ENCODE measurements at regions of chr3 and their contacts with region 1.

Region 1: DNA sequence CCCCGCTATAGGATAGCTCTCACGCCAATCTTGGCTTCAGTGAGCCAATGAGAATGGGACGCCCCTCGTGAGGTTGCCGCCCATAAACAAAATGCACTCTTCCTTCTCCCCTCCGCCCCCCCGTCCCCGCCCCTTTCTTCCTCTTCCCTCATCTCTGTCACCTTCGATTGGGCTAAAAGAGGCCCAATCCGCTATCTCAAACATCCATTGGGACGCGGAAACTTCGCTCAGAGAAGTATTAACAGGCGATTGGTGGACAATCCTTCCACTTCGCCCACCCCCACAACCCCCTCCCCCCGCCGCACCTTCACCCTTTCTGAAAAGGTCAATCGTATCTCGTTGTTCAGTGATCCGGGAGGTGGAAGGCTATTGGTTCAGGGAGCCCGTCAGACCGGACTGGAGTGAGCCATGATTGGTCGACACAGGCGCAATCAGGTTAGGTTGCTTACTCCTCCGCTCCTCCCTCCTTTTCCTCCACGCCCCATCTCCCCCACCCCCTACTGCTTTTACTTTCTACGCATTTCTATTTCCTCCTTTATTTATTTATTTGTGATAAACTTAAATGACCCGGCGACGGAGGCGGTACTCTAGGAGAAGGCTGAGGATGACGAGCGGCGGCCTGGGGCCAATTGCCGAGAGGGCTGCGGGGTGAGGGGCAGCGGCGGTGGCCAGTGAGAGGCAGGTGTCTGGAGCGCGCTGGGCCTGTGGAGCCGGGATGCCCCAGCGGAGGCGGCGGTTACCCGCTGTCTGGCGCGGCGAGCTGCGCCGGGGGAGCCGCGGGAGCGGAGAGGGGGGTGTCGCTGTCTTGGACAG is 447 bp upstream of the ZBTB20 start:
- DNase-seq: peak; percentile 85
- ATAC-seq: peak; percentile 84
- H3K4me3 Mint-ChIP-seq: peak overlapping the region; percentile 99
- H3K27ac Mint-ChIP-seq: peak overlapping the region; percentile 100
- H3K4me1 Mint-ChIP-seq: peaks cover 9% of the 10 kb centered on the region
- H3K27me3 Mint-ChIP-seq: no peaks in the 10 kb centered on the region

Region 2: DNA sequence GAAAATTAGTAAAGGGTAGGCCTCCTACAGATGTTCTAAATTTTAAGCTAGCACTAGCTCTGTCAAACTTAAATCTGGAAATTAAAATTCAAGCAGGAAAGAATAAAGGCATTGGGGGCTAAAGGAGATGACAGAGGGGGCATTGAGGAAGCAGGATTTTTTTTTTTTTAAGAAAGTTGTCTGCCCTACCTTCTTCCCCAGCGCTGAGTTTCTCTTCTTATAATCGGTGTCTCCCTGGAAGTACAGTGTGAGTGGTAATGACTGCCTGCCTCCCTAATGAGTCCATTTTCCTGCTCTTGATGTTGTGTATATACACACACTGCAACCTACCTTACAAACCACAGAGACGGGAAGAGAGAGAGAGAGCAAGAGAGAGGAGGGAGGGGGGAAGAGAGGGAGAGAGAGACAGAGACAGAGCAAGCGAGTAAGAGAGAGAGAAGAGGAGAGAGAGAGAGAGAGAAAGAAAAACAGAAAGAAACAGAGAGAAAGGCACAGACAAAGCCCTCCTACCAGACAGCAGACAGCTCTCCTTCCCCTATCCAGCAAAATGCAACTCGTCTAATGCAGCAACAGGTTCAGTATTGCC is 47.5 kb before region 1 on chr3:
- POLR2A ChIA-PET with region 1: interaction called, 31 read pairs
- DNase-seq: no peak
- ATAC-seq: peak; percentile 92
- H3K4me3 Mint-ChIP-seq: peak overlapping the region; percentile 82
- H3K27ac Mint-ChIP-seq: peak overlapping the region; percentile 84
- H3K4me1 Mint-ChIP-seq: peaks cover 11% of the 10 kb centered on the region
- H3K27me3 Mint-ChIP-seq: no peaks in the 10 kb centered on the region

Region 3: DNA sequence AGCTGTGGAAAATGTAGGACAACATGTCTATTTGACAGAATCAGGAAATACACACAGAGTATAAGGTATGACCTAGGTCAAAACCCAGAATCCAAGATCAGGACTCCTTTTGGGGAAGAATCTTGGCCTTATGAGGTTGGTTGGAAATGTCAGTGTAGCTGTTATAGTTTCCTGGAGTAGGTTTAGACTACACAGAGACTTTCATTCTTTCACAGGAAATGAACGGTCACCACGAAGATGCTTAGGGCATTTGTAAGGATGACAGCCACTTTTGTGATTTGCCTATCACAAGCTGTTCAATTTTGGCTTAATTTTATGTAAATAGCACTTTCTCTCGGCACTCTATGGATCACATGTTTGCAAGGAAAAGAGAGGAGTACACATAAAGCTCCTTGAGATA is 18.2 kb after region 1 on chr3:
- POLR2A ChIA-PET with region 1: interaction called, 79 read pairs
- DNase-seq: no peak
- ATAC-seq: peak; percentile 57
- H3K4me3 Mint-ChIP-seq: peak overlapping the region; percentile 58
- H3K27ac Mint-ChIP-seq: peak overlapping the region; percentile 75
- H3K4me1 Mint-ChIP-seq: peaks cover 29% of the 10 kb centered on the region
- H3K27me3 Mint-ChIP-seq: no peaks in the 10 kb centered on the region

Region 4: DNA sequence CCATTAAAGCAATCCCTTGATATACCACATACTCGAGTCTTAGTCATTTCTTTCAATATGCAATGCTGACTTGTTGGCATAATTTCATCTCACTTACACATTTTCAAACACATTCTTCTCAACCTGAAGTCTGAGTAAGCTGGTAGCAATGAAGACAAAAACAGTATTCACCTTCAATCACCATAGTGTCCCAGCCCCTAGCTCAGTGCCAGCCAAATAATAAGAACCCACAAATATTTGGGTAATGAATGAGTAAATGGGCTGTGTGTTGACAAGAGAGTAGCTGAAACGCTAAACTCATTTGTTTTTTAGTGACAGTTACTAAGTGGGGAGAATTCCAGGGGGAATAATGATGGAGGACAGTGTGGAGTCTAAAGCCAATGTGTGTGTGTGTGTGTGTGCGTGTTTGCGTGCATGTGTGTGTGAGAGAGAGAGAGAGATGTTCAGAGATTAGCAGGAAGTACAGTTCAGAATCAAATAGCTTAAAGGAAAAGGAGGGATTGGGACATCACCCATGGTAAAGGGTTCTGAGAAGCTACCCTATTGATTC is 641.5 kb after region 1 on chr3:
- POLR2A ChIA-PET with region 1: interaction called, 14 read pairs
- DNase-seq: no peak
- ATAC-seq: no peak
- H3K4me3 Mint-ChIP-seq: no peak overlapping the region
- H3K27ac Mint-ChIP-seq: no peak overlapping the region
- H3K4me1 Mint-ChIP-seq: peaks cover 34% of the 10 kb centered on the region
- H3K27me3 Mint-ChIP-seq: peaks cover 3% of the 10 kb centered on the region

Measured in activated naive CD8-positive, alpha-beta T cell treated with anti-CD3 and anti-CD28 coated beads, Interleukin-2, amount 10 ng/mL, durations not matched to agents 7 days and 5 days (primary cell).